MCF 10A (cell line): ENCODE measurements at regions of chr11 and their contacts with region 1.

Region 1: GRCh38 chr11:59680287-59681154 is 11.7 kb upstream of the PATL1 start:
- DNase-seq: peak; percentile 76
- H3K4me3 Mint-ChIP-seq: no peak overlapping the region
- H3K27ac Mint-ChIP-seq: no peak overlapping the region
- H3K4me1 Mint-ChIP-seq: no peaks in the 10 kb centered on the region
- H3K27me3 Mint-ChIP-seq: no peaks in the 10 kb centered on the region
- CTCF ChIP-seq: peak; percentile 84

Region 2: GRCh38 chr11:59207988-59208451 is 472.5 kb before region 1 on chr11:
- CTCF ChIA-PET with region 1: interaction called, 3 read pairs
- POLR2A ChIA-PET with region 1: no interaction called
- intact Hi-C with region 1: loop called (anchors 1 kb)
- DNase-seq: peak; percentile 59
- H3K4me3 Mint-ChIP-seq: no peak overlapping the region
- H3K27ac Mint-ChIP-seq: no peak overlapping the region
- H3K4me1 Mint-ChIP-seq: peaks cover 11% of the 10 kb centered on the region
- H3K27me3 Mint-ChIP-seq: peaks cover 17% of the 10 kb centered on the region
- CTCF ChIP-seq: peak; percentile 62

Region 3: GRCh38 chr11:59289356-59290181 is 391.0 kb before region 1 on chr11:
- CTCF ChIA-PET with region 1: no interaction called
- POLR2A ChIA-PET with region 1: no interaction called
- intact Hi-C with region 1: loop called (anchors 5 kb)
- DNase-seq: no peak
- H3K4me3 Mint-ChIP-seq: no peak overlapping the region
- H3K27ac Mint-ChIP-seq: no peak overlapping the region
- H3K4me1 Mint-ChIP-seq: peaks cover 3% of the 10 kb centered on the region
- H3K27me3 Mint-ChIP-seq: peaks cover 56% of the 10 kb centered on the region
- CTCF ChIP-seq: no peak

Region 4: GRCh38 chr11:59545179-59546020 is 135.1 kb before region 1 on chr11:
- CTCF ChIA-PET with region 1: interaction called, 18 read pairs
- POLR2A ChIA-PET with region 1: no interaction called
- intact Hi-C with region 1: no loop called
- DNase-seq: peak; percentile 93
- H3K4me3 Mint-ChIP-seq: no peak overlapping the region
- H3K27ac Mint-ChIP-seq: peak overlapping the region; percentile 86
- H3K4me1 Mint-ChIP-seq: peaks cover 25% of the 10 kb centered on the region
- H3K27me3 Mint-ChIP-seq: no peaks in the 10 kb centered on the region
- CTCF ChIP-seq: no peak

Region 5: DNA sequence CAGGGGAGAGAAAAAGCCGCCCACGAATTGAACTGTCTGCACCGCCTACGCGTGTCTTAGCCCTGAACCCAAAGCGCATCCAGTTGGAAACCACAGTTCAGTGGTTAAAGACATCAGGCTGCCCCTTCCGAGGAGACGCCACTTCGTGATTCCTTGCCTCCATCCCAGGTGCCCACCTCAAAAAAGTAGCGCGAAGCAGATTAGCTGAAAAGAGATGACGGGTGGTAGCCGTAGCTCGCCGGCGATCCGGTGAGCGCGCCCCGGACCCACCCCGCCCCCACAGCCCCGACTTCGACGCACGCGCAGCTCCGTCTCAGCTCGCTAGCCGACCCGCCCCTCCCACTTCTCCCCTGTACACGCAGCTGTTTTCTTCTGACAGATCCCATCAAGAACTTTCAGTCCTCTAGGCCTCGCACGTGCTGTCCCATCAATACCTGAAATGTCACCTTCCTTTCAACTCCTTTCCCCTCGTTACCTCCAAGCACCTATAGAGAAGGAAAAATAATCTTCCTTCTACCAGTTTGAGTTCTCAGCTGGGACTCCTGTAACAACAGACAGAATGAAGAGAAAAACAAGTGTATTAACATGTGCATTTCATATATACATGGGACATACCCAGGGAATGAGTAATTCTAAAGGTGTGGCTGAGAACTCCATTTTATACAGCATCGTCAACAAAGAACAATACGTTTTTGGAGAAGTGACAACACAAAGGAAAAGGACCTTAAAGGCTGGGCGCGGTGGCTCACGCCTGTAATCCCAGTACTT is 119.6 kb before region 1 on chr11:
- CTCF ChIA-PET with region 1: no interaction called
- POLR2A ChIA-PET with region 1: no interaction called
- intact Hi-C with region 1: no loop called
- DNase-seq: peak; percentile 88
- H3K4me3 Mint-ChIP-seq: peak overlapping the region; percentile 78
- H3K27ac Mint-ChIP-seq: peak overlapping the region; percentile 99
- H3K4me1 Mint-ChIP-seq: peaks cover 13% of the 10 kb centered on the region
- H3K27me3 Mint-ChIP-seq: no peaks in the 10 kb centered on the region
- CTCF ChIP-seq: no peak

Region 6: GRCh38 chr11:59802639-59803176 is 122.2 kb after region 1 on chr11:
- CTCF ChIA-PET with region 1: interaction called, 6 read pairs
- POLR2A ChIA-PET with region 1: no interaction called
- intact Hi-C with region 1: loop called (anchors 5 kb)
- DNase-seq: peak; percentile 73
- H3K4me3 Mint-ChIP-seq: no peak overlapping the region
- H3K27ac Mint-ChIP-seq: no peak overlapping the region
- H3K4me1 Mint-ChIP-seq: no peaks in the 10 kb centered on the region
- H3K27me3 Mint-ChIP-seq: no peaks in the 10 kb centered on the region
- CTCF ChIP-seq: peak; percentile 74